ENCODE measurements at regions of chr2 and their contacts with region 1.

Region 1: DNA sequence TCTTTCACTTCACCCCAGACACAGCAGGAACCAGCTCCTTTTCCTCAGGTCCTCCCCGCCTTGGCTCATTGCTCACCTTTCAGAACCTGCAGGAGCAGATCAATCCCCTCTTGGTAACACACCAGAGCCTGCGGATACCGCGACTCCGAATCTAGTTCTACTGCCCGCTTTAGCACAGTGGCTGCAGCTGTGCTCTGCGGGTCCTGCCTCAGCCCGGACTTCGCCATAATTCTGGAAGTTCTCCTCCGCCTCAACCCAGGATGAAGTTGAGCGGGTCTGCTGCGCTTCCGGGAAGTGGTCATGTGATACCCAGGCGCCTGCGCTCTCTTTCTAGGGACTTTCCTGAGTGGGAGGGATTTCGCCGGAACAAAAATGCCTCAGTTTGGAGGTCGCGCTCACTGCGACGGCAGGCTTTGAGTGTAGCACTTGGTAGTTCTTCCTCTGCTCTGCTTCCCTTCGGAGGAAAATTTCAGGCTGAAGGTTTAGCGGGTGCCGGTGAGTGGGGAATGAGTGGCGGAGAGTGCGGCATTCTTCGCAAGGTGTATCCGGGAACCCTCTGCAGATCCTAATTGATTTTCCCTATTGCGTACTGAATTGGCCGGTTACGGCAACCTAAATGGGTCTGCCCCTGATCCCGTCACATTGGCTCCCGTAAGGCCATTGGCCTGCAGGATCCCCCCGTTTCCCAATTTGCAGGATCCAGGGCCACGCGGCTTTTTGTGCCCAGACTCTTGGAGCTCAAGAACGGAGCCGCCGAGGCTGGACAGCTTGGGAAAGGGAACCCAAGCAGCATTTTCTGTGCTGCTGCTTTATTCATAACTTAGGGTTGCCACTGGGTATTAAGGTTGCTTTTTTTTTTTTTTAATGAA is at the starts of genes MITD1 and MRPL30:
- DNase-seq: peak; percentile 85 to 94
- ATAC-seq: peak; percentile 97 to 100 (median 99)
- H3K4me3 ChIP-seq: peak within 1 kb of the TSS; percentile 35 to 99 (median 74)
- H3K27ac ChIP-seq: peak within 1 kb of the TSS in 9 of 10 donors; percentile 60 to 89 (median 77)
- H3K4me1 ChIP-seq: peaks cover 4 to 47% (median 36%) of the 10 kb centered on the region in 9 donors
- H3K27me3 ChIP-seq: no peaks in the 10 kb centered on the region
- CTCF ChIP-seq: no peak
- total RNA-seq, gene MITD1: 9.3 to 14.2 (median 11.8) TPM
- total RNA-seq, gene MRPL30: 31.9 to 43.2 (median 36.1) TPM

Region 2: DNA sequence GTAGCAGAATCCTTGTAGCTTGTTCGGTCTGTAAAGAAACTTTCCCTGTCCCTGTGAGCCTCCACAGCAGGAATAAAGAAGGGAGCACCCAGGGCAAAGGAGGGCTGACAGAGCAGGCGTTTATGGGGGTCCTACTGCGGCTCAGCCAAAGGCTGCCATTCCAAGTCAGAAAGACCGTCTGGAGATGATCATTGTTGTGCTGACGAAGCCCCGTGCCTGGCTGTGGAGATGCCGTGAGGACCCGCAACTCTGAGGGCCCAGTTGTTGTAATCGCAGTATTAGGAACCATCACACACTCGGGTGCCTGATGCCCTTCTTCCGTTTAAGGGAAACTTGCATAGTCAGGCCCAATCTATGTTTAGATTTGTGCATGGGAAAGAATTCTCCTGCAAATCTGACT is 1110.9 kb before region 1 on chr2:
- intact Hi-C with region 1: loop called in 1 of 10 experiments (anchors 5 kb)
- DNase-seq: no peak
- ATAC-seq: peak in 1 of 8 donors; percentile 44
- H3K4me3 ChIP-seq: no peak overlapping the region
- H3K27ac ChIP-seq: peak overlapping the region in 1 of 10 donors; percentile 22
- H3K4me1 ChIP-seq: no peaks in the 10 kb centered on the region
- H3K27me3 ChIP-seq: peaks cover 0 to 4% (median 0%) of the 10 kb centered on the region in 7 donors
- CTCF ChIP-seq: no peak

Region 3: DNA sequence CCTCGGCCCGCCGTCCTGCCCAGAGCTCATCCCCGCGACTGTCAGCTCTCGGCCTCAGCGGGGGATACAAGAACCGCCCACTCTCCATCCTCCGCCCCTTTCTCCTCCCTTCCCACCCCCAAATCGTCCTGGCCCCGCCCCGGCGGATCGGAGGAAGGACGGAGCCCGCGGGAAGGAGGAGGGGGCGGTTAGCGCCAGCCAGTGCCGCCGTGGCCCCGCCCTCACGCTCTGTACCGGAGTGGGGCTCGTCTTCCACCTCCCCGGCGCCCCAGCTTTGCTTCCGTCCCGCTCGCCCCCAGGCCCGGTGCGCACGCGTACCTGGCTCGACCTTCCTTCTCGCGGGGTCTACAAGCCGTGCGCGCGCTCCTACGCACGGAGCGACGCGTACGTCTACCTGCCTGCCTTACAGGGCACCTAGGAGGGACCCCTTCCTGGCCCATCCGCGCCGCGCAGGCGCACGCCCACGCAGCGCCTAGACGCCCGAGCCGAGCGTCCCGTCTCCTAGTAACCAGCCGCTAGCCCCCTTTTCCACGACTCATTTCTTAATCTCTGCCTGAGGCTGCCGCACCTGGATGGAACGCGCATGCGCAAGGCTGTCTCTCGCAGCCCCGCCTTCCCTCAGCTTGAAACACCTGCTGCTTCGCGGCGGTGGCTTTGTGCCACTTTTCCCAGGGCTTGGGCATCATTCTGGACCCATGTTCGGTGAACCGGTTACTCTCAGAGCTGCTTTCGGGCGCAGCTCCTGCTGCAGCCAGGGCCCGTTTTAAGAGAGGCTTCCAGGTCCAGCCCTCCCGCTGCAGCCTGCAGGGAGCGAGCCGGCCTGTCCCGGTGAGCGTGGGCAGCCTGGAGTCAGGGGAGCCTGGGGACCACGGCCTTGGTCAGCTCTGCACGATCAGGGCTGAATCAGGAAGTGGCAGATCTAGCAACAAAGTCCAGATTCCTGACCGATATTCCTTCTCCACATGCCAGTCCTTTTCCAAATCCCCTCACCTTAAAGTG is 39.6 kb before region 1 on chr2 and contains the start of gene C2orf15:
- intact Hi-C with region 1: loop called in 1 of 10 experiments (anchors 5 kb)
- DNase-seq: peak; percentile 92
- ATAC-seq: peak; percentile 97 to 99 (median 98)
- H3K4me3 ChIP-seq: peak within 1 kb of the TSS; percentile 68 to 99 (median 88)
- H3K27ac ChIP-seq: peak within 1 kb of the TSS; percentile 13 to 82 (median 72)
- H3K4me1 ChIP-seq: peaks cover 0 to 19% (median 12%) of the 10 kb centered on the region in 9 donors
- H3K27me3 ChIP-seq: no peaks in the 10 kb centered on the region
- CTCF ChIP-seq: no peak
- total RNA-seq, gene C2orf15: 0.23 to 0.30 (median 0.28) TPM in 3 of 10 donors, not detected in the others

Region 4: DNA sequence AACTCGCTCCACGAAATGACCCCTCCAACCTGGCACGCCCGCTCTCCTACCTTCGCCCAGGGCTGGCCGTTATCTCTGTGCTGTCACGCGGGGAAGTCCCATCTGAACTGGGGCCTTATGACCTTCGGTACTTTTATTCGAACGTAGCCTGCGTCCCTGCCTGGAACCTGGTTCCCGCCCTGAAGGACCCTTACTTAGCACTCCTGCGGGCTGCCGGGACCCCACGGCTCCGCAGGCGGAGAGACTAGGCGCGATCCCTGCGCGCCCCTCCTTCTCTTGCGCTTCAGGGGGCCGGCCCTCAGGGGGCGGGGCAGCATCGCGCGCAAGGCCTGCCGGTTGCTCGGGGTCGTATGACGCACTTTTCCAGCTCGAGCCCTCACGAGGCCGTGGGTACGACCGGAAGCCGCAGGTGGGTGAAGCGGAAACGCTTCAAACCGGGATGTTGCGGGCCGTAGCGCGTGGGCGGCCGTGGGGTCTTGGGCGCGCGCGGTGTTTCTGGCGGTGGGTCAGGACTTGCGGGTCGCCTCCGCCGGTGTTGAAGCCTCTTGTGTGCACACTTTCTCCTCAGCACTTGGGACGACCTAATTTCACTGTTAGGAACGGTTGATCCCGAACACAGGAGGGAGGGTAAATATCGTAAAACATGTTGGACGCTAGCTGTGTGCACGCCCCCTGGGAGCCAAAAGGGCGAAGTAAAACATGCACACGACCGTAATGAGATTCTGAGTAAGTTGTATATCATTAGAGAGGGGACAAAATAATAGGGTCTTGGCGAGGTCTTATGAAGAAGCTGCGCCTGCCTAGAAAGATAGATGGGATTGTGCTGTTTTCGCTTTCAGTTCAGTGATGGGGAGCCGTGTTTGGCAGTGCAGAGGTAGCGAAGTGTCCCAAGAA is 26.1 kb before region 1 on chr2 and contains the starts of genes LIPT1 and TSGA10:
- intact Hi-C with region 1: loop called in 2 of 10 experiments (anchors 2 kb)
- DNase-seq: peak; percentile 90 to 93
- ATAC-seq: peak; percentile 98 to 100 (median 99)
- H3K4me3 ChIP-seq: peak within 1 kb of the TSS; percentile 64 to 85 (median 70)
- H3K27ac ChIP-seq: peak within 1 kb of the TSS; percentile 45 to 93 (median 88)
- H3K4me1 ChIP-seq: peaks cover 0 to 28% (median 22%) of the 10 kb centered on the region in 9 donors
- H3K27me3 ChIP-seq: no peaks in the 10 kb centered on the region
- CTCF ChIP-seq: peak in 2 of 9 donors; percentile 10 to 17
- total RNA-seq, gene LIPT1: 6.2 to 10.1 (median 7.6) TPM
- total RNA-seq, gene TSGA10: 1.4 to 4.1 (median 3.0) TPM

Region 5: GRCh38 chr2:99337113-99338028 is 156.4 kb after region 1 on chr2 and contains the start of gene EIF5B:
- intact Hi-C with region 1: loop called in 9 of 10 experiments (anchors 1 to 10 kb)
- DNase-seq: peak; percentile 95 to 97
- ATAC-seq: peak; percentile 91 to 96 (median 94)
- H3K4me3 ChIP-seq: peak within 1 kb of the TSS; percentile 66 to 100 (median 90)
- H3K27ac ChIP-seq: peak within 1 kb of the TSS; percentile 55 to 98 (median 89)
- H3K4me1 ChIP-seq: peaks cover 3 to 57% (median 42%) of the 10 kb centered on the region in 9 donors
- H3K27me3 ChIP-seq: no peaks in the 10 kb centered on the region
- CTCF ChIP-seq: peak; percentile 40 to 89 (median 70)
- total RNA-seq, gene EIF5B: 64.5 to 123 (median 91.8) TPM

Measured in heart right ventricle (tissue), 16 donors.